ENCODE measurements at regions of chr3 and their contacts with region 1.

Region 1: GRCh38 chr3:168371846-168372245 is 276.1 kb upstream of the GOLIM4 start:
- DNase-seq: no peak
- H3K4me3 ChIP-seq: no peak overlapping the region
- H3K27ac ChIP-seq: no peak overlapping the region
- H3K4me1 ChIP-seq: no peaks in the 10 kb centered on the region
- H3K27me3 ChIP-seq: no peaks in the 10 kb centered on the region
- CTCF ChIP-seq: no peak
- POLR2A ChIP-seq: no peak

Region 2: GRCh38 chr3:167989999-167990398 is 381.8 kb before region 1 on chr3:
- CTCF ChIA-PET with region 1: no interaction called
- POLR2A ChIA-PET with region 1: no interaction called
- dilution Hi-C with region 1: no loop called
- intact Hi-C with region 1: loop called (anchors 5 kb)
- DNase-seq: no peak
- H3K4me3 ChIP-seq: no peak overlapping the region
- H3K27ac ChIP-seq: no peak overlapping the region
- H3K4me1 ChIP-seq: no peaks in the 10 kb centered on the region
- H3K27me3 ChIP-seq: peaks cover 0 to 5% of the 10 kb centered on the region in 2 experiments
- CTCF ChIP-seq: no peak
- POLR2A ChIP-seq: no peak